Mammary epithelial cell (primary cell): ENCODE measurements at regions of chr13 and their contacts with region 1.

Region 1: GRCh38 chr13:44744880-44745633 is 168.9 kb upstream of the TSC22D1 start:
- DNase-seq: peak; percentile 99
- H3K4me3 ChIP-seq: no peak overlapping the region
- H3K27ac ChIP-seq: peak overlapping the region; percentile 87
- H3K4me1 ChIP-seq: peaks cover 25% of the 10 kb centered on the region
- H3K27me3 ChIP-seq: no peaks in the 10 kb centered on the region
- CTCF ChIP-seq: no peak

Region 2: DNA sequence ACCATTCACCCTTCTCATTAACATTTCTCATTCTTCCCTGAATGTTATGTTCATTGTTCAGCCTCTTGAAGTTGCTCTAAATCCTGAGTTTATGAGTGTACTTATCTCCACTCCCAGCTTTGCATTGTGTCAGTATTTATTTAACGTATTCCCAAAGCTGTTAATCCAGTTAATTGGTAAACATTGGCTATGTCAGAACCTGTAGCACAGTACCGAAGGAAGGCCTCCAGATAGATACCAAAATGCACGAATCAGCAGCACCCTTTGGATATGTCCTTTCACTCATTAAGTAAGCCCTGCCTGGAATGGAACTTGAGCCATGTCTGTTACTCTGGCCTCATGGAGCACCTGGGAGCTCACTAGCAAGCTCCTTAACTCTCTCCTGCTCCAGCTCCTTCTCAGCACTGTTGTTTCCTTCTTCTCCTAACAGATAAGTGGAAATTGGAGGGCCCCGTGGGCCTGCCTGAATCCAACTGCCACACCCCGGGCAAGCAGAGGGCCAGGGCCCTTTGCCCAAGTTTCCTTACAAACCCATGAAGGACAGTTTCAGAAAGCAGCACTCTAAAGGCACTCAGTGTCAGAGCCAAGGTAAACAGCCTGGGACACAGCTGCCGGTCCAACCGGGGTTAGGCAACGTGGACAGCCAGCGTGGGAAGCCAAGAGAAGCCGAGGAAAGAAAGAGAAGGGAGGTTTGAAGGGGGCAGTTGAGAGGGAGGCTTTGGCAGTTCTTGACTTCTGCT is 526.4 kb before region 1 on chr13:
- CTCF ChIA-PET with region 1: no interaction called
- dilution Hi-C with region 1: no loop called
- in situ Hi-C with region 1: no loop called
- intact Hi-C with region 1: no loop called
- DNase-seq: no peak
- H3K4me3 ChIP-seq: no peak overlapping the region
- H3K27ac ChIP-seq: no peak overlapping the region
- H3K4me1 ChIP-seq: no peaks in the 10 kb centered on the region
- H3K27me3 ChIP-seq: no peaks in the 10 kb centered on the region
- CTCF ChIP-seq: no peak

Region 3: GRCh38 chr13:44710576-44710975 is 34.5 kb before region 1 on chr13:
- CTCF ChIA-PET with region 1: no interaction called
- dilution Hi-C with region 1: no loop called
- in situ Hi-C with region 1: no loop called
- intact Hi-C with region 1: loop called (anchors 1 kb)
- DNase-seq: peak; percentile 91
- H3K4me3 ChIP-seq: no peak overlapping the region
- H3K27ac ChIP-seq: peak overlapping the region; percentile 94
- H3K4me1 ChIP-seq: peaks cover 54% of the 10 kb centered on the region
- H3K27me3 ChIP-seq: no peaks in the 10 kb centered on the region
- CTCF ChIP-seq: no peak